Heart left ventricle (tissue), 16 donors: ENCODE measurements at regions of chr21 and their contacts with region 1.

Region 1: DNA sequence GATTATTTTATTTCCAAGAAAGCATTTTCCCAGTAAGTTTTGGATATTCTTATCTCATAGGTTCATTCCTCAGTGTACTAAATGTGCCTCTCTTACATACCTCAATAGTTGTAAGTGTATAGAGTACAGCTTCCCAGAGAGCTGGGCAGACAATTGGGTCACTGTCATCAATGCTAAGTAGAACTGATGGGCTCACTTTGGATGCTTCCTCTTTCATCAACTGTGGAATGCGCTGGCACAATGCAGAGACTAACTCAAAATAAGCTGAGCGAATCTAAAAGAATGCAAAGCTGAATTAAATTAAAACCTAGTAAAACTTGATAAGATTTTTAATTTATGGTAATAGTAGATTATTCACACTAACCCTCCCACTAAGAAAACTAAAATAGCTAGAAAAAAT is 21.5 kb downstream of the LTN1 start:
- DNase-seq: no peak
- ATAC-seq: no peak
- H3K4me3 ChIP-seq: no peak overlapping the region
- H3K27ac ChIP-seq: no peak overlapping the region
- H3K4me1 ChIP-seq: peaks cover 0 to 19% (median 2%) of the 10 kb centered on the region in 12 donors
- H3K27me3 ChIP-seq: no peaks in the 10 kb centered on the region
- CTCF ChIP-seq: no peak
- POLR2A ChIP-seq: no peak

Region 2: DNA sequence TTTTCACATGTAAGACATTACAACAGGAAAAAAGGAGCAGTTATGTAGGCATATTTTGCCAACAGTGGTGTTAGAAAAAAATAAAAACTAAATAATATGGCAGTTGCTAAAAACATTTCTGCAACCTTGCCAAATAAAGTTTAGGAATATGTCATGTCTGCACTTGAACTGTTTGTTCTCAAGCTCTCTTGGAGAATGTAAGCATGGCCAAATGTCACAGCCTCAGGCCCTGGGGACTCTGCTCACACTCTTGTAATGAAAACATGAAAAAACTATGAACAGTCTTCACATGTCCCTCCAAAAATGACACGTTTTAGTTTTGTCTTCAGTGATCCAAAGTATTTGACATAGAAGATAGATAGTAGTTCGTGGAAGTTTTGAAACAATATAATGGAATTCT is 731.8 kb before region 1 on chr21:
- intact Hi-C with region 1: no loop called
- DNase-seq: peak in 1 of 5 donors; percentile 58
- ATAC-seq: peak; percentile 70 to 93 (median 86)
- H3K4me3 ChIP-seq: no peak overlapping the region
- H3K27ac ChIP-seq: peak overlapping the region in 2 of 12 donors; percentile 32 to 45
- H3K4me1 ChIP-seq: peaks cover 0 to 28% (median 8%) of the 10 kb centered on the region in 12 donors
- H3K27me3 ChIP-seq: no peaks in the 10 kb centered on the region
- CTCF ChIP-seq: no peak
- POLR2A ChIP-seq: no peak

Region 3: DNA sequence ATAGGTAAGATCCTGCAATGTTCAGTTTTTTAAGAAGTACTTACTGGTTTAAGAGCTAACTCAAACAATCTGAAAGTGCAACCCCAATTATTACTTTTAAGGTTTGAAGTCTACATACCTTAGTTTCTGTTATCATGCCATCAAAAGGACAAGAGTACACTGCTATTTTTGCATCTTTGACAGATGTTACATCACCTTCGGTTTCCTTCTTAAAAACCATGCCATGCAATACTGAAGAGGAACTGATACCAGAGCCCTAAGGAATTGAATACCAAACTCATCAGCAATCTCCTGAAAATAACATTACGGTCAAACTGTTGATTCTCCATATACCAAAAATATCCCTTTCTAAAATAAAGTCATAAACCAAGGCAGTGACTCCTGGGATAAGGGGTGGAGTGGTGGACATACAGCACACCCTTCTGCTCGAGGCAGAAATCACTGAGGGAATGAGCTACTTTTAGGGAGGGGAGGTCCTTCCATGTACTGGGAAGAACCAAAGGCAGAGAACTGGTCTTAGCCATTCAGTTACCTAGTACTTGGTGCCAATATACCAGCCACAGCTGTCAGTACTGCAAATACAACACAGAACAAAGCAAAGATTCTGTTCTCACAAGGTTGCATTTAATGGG is 93.8 kb after region 1 on chr21:
- intact Hi-C with region 1: loop called in 1 of 10 experiments (anchors 5 kb)
- DNase-seq: no peak
- ATAC-seq: peak in 3 of 4 donors; percentile 28 to 58 (median 52)
- H3K4me3 ChIP-seq: no peak overlapping the region
- H3K27ac ChIP-seq: peak overlapping the region in 1 of 12 donors; percentile 25
- H3K4me1 ChIP-seq: peaks cover 0 to 14% (median 0%) of the 10 kb centered on the region in 12 donors
- H3K27me3 ChIP-seq: no peaks in the 10 kb centered on the region
- CTCF ChIP-seq: no peak
- POLR2A ChIP-seq: no peak